ENCODE measurements at regions of chr12 and their contacts with region 1.

Region 1: DNA sequence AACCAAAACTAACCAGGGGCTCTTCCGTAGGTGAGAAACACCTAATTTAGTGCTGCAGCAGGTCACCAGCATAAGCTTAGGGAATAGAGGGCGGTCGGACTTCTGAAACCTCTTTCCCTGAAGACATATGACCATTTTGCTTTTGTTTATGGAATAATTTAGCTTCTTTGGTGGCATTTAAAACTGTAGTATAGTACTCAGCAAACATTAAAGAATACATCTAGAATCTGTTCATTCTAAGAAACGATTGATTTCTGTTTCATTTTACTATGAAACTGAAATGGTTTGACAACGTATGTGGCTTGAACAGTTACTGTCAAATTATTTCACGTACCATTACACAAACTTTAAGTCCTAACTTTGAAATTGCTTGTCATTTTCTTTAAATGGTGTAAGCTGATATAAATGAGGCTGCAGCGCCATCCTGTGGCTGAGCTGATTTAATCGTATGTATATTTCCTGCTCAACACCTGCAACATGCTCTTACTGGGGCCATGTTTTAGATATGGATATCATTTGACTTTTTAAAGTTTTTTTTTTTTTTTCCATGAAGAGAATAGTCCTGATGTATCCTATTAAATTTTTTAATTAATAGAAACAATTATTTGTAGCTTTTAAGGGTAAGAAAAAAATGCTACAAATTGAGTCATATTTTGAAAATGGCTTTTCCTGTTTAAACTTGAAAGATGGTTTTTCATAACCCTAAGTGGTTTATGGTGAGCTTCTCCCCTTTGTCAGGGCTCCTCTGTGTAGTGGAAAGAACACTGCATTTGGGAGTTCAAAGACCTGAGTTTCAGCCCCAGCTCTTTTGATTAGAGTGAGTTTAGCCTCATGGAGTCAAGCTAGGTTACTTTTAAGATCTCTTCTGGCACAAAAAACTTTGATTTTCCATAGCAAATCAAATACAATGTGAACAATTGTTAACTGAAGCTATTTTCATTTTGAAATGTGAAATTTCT is 27.4 kb downstream of the CFAP54 start:
- DNase-seq: peak; percentile 73 to 91 (median 88)
- ATAC-seq: peak; percentile 89
- H3K4me3 ChIP-seq: no peak overlapping the region
- H3K4me3 Mint-ChIP-seq: peak overlapping the region; percentile 50
- H3K27ac ChIP-seq: no peak overlapping the region
- H3K27ac Mint-ChIP-seq: no peak overlapping the region
- H3K4me1 ChIP-seq: peaks cover 11% of the 10 kb centered on the region
- H3K4me1 Mint-ChIP-seq: peaks cover 11% of the 10 kb centered on the region
- H3K27me3 ChIP-seq: no peaks in the 10 kb centered on the region
- H3K27me3 Mint-ChIP-seq: no peaks in the 10 kb centered on the region
- CTCF ChIP-seq: peak; percentile 91

Region 2: GRCh38 chr12:96061864-96062453 is 454.8 kb before region 1 on chr12:
- CTCF ChIA-PET with region 1: interaction called, 91 read pairs
- POLR2A ChIA-PET with region 1: interaction called, 3 read pairs
- intact Hi-C with region 1: loop called (anchors 1 kb)
- DNase-seq: peak; percentile 61 to 89 (median 77)
- ATAC-seq: peak; percentile 94
- H3K4me3 ChIP-seq: no peak overlapping the region
- H3K4me3 Mint-ChIP-seq: no peak overlapping the region
- H3K27ac ChIP-seq: no peak overlapping the region
- H3K27ac Mint-ChIP-seq: peak overlapping the region; percentile 2
- H3K4me1 ChIP-seq: peaks cover 7% of the 10 kb centered on the region
- H3K4me1 Mint-ChIP-seq: peaks cover 14% of the 10 kb centered on the region
- H3K27me3 ChIP-seq: no peaks in the 10 kb centered on the region
- H3K27me3 Mint-ChIP-seq: no peaks in the 10 kb centered on the region
- CTCF ChIP-seq: peak; percentile 79

Region 3: DNA sequence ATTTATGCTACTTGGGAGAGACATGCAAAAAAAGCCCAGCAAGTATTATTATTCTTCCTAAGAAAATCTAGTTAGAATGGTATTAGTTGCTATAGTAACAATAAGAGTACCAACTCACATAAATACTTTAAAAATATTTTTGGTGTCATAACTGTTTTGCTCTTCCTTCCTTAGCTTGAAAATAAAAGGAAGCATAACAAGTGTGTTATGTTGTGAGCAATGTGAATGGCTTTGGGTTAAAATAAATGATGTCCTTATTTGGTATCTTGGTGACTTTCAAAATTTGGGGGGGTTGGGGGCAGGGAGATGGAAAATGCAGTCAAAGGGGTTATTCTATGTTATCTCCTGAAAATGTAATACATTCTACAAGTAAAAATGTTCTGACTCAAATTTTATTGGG is 231.6 kb before region 1 on chr12:
- CTCF ChIA-PET with region 1: interaction called, 6 read pairs
- POLR2A ChIA-PET with region 1: no interaction called
- intact Hi-C with region 1: loop called in 1 of 2 experiments (anchors 5 kb)
- DNase-seq: no peak
- ATAC-seq: no peak
- H3K4me3 ChIP-seq: no peak overlapping the region
- H3K4me3 Mint-ChIP-seq: no peak overlapping the region
- H3K27ac ChIP-seq: no peak overlapping the region
- H3K27ac Mint-ChIP-seq: no peak overlapping the region
- H3K4me1 ChIP-seq: no peaks in the 10 kb centered on the region
- H3K4me1 Mint-ChIP-seq: peaks cover 7% of the 10 kb centered on the region
- H3K27me3 ChIP-seq: no peaks in the 10 kb centered on the region
- H3K27me3 Mint-ChIP-seq: no peaks in the 10 kb centered on the region
- CTCF ChIP-seq: no peak

Region 4: DNA sequence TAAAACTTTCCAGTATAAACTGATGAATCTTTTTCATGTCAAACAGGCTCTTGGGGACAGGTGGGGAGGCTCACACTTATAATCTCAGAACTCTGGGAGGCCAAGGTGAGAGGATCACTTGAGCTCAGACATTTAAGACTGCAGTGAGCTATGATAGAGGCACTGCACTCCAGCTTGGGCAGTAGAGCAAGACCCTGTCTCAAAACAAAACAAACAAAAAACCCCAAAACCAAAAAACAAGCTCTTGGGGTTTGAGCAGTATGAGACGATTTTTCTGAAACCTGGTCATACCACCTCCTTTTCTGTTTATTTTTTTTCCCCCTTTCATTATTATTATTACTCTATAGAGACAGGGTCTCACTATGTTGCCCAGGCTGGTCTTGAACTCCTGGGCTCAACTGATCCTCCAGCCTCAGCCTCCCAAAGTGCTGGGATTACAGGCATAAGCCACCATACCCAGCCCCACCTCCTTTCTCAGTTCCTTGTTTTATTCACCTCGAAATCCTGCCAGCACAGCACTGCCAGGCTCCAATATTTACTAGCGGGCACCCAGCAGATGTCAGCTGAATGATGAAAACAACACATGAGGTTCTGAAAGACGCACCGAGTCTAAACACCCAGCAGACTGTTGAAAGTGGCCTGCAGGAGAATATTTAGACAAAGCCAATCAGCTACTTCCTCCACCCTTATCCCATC is 97.0 kb before region 1 on chr12:
- CTCF ChIA-PET with region 1: interaction called, 3 read pairs
- POLR2A ChIA-PET with region 1: no interaction called
- intact Hi-C with region 1: loop called in 1 of 2 experiments (anchors 5 kb)
- DNase-seq: no peak
- ATAC-seq: no peak
- H3K4me3 ChIP-seq: no peak overlapping the region
- H3K4me3 Mint-ChIP-seq: no peak overlapping the region
- H3K27ac ChIP-seq: no peak overlapping the region
- H3K27ac Mint-ChIP-seq: peak overlapping the region; percentile 32
- H3K4me1 ChIP-seq: no peaks in the 10 kb centered on the region
- H3K4me1 Mint-ChIP-seq: peaks cover 22% of the 10 kb centered on the region
- H3K27me3 ChIP-seq: no peaks in the 10 kb centered on the region
- H3K27me3 Mint-ChIP-seq: no peaks in the 10 kb centered on the region
- CTCF ChIP-seq: no peak